ENCODE measurements at regions of chr15 and their contacts with region 1.

Region 1: DNA sequence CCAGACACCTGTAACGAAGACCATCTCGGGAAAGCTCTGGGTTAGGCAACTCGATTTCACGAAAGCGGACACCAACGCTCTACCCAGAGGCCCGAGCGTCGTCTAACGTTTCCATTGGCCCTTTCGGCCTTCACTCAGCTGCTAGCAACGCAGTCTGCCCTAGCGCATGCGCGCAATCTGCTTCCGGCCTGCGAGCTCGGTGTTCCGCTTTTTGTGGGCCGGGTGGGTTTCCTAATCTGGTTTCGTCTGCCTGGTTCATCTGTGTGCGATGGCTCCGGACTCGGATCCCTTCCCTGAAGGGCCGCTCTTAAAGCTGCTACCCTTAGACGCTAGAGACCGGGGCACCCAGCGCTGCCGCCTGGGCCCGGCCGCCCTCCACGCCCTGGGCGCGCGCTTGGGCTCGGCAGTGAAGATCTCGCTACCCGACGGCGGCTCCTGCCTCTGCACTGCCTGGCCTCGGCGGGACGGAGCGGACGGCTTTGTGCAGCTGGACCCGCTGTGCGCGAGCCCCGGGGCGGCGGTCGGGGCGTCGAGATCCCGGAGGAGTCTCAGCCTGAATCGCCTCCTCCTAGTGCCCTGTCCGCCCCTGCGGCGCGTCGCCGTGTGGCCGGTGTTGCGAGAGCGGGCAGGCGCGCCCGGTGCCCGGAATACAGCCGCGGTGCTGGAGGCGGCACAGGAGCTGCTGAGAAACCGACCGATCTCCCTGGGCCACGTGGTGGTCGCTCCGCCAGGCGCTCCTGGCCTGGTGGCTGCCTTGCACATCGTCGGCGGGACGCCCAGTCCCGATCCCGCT is 24.0 kb upstream of the GATM start:
- DNase-seq: peak; percentile 90
- ATAC-seq: peak; percentile 92
- H3K4me3 Mint-ChIP-seq: peak overlapping the region; percentile 95
- H3K27ac Mint-ChIP-seq: peak overlapping the region; percentile 91
- H3K4me1 Mint-ChIP-seq: peaks cover 33% of the 10 kb centered on the region
- H3K27me3 Mint-ChIP-seq: no peaks in the 10 kb centered on the region
- CTCF ChIP-seq: no peak

Region 2: GRCh38 chr15:44728576-44729407 is 673.6 kb before region 1 on chr15:
- CTCF ChIA-PET with region 1: no interaction called
- POLR2A ChIA-PET with region 1: no interaction called
- intact Hi-C with region 1: loop called (anchors 5 kb)
- DNase-seq: peak; percentile 86
- ATAC-seq: peak; percentile 74
- H3K4me3 Mint-ChIP-seq: peak overlapping the region; percentile 99
- H3K27ac Mint-ChIP-seq: peak overlapping the region; percentile 100
- H3K4me1 Mint-ChIP-seq: peaks cover 75% of the 10 kb centered on the region
- H3K27me3 Mint-ChIP-seq: no peaks in the 10 kb centered on the region
- CTCF ChIP-seq: no peak

Region 3: DNA sequence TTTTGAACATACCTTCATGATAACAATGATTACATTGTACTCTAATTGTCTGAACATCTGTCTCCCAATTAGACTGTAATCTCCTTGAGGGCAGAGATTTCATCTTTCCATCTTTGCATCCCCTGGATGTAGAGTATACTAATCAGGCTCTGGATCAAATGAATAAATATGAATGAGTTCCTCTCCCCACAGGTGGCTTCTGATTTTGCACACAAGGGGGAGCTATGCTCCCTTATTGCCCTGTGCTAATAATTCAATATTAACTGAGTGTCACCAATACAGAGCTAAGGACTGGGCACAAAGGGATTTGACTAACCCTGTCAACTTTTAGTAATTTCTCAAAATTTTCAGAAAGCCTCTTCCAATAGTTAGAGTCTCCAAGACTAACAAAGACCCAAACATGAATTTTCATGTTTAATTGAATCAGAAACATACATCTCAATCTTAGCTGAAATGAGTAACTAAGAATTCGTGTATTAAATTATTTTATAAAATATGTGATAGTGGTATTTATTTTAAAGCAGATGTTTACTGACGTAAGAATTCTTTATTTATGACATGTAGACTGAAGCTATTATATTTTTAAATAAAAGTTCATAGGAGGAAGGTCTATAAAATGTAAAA is 275.7 kb before region 1 on chr15:
- CTCF ChIA-PET with region 1: interaction called, 9 read pairs
- POLR2A ChIA-PET with region 1: no interaction called
- intact Hi-C with region 1: loop called (anchors 1 kb)
- DNase-seq: no peak
- ATAC-seq: peak; percentile 68
- H3K4me3 Mint-ChIP-seq: no peak overlapping the region
- H3K27ac Mint-ChIP-seq: no peak overlapping the region
- H3K4me1 Mint-ChIP-seq: peaks cover 7% of the 10 kb centered on the region
- H3K27me3 Mint-ChIP-seq: peaks cover 59% of the 10 kb centered on the region
- CTCF ChIP-seq: no peak

Region 4: GRCh38 chr15:45179221-45179985 is 223.0 kb before region 1 on chr15:
- CTCF ChIA-PET with region 1: interaction called, 11 read pairs
- POLR2A ChIA-PET with region 1: no interaction called
- intact Hi-C with region 1: no loop called
- DNase-seq: no peak
- ATAC-seq: peak; percentile 45
- H3K4me3 Mint-ChIP-seq: no peak overlapping the region
- H3K27ac Mint-ChIP-seq: no peak overlapping the region
- H3K4me1 Mint-ChIP-seq: peaks cover 3% of the 10 kb centered on the region
- H3K27me3 Mint-ChIP-seq: no peaks in the 10 kb centered on the region
- CTCF ChIP-seq: no peak

Region 5: GRCh38 chr15:45279024-45279698 is 123.2 kb before region 1 on chr15:
- CTCF ChIA-PET with region 1: interaction called, 3 read pairs
- POLR2A ChIA-PET with region 1: interaction called, 21 read pairs
- intact Hi-C with region 1: loop called (anchors 1 kb)
- DNase-seq: peak; percentile 99
- ATAC-seq: peak; percentile 99
- H3K4me3 Mint-ChIP-seq: peak overlapping the region; percentile 93
- H3K27ac Mint-ChIP-seq: peak overlapping the region; percentile 89
- H3K4me1 Mint-ChIP-seq: peaks cover 14% of the 10 kb centered on the region
- H3K27me3 Mint-ChIP-seq: no peaks in the 10 kb centered on the region
- CTCF ChIP-seq: no peak

Region 6: GRCh38 chr15:45378149-45378912 is 24.0 kb before region 1 on chr15 and contains the start of gene GATM:
- CTCF ChIA-PET with region 1: interaction called, 8 read pairs
- POLR2A ChIA-PET with region 1: interaction called, 19 read pairs
- intact Hi-C with region 1: loop called (anchors 1 kb)
- DNase-seq: peak; percentile 64
- ATAC-seq: peak; percentile 85
- H3K4me3 Mint-ChIP-seq: peak within 1 kb of the TSS; percentile 87
- H3K27ac Mint-ChIP-seq: peak within 1 kb of the TSS; percentile 86
- H3K4me1 Mint-ChIP-seq: peaks cover 25% of the 10 kb centered on the region
- H3K27me3 Mint-ChIP-seq: peaks cover 2% of the 10 kb centered on the region
- CTCF ChIP-seq: no peak
- total RNA-seq, gene GATM: 12.6 and 15.7 TPM in 2 replicates

Region 7: DNA sequence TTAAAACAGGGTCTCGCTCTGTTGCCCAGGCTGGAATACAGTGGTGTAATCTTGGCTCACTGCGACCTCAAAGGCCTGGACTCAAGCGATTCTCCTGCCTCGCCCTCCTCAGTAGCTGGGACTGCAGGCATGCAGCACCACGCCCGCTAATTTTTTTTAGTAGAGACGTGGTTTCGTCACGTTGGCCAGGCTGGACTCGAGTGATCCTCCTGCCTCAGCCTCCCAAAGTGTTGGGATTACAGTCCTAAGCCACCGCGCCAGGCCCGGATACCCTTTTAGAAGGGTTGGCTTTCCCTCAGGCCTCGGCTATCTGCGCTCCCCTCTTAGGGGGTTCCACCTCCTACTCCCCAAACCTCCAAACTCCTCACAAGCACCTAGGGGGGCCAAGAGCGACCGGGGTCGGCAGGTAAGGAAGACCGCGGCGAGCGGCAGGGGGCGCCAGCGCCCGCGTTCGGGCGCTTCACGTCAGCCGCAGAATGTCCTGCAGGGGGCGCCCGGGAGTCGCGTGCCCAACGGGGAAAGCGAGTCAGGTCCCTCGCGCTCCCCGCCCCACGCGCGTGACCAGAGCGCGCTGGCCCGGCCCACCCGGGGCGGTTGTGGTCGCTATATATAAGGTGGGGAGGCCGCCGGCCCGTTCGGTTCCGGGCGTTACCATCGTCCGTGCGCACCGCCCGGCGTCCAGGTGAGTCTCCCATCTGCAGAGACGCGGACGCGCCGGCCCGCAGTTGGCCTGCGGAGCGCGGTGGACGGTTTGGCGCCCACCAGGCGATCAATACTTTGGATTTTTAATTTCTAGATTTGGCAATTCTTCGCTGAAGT is 27.8 kb after region 1 on chr15:
- CTCF ChIA-PET with region 1: no interaction called
- POLR2A ChIA-PET with region 1: no interaction called
- intact Hi-C with region 1: no loop called
- DNase-seq: peak; percentile 87
- ATAC-seq: peak; percentile 94
- H3K4me3 Mint-ChIP-seq: peak overlapping the region; percentile 35
- H3K27ac Mint-ChIP-seq: no peak overlapping the region
- H3K4me1 Mint-ChIP-seq: peaks cover 4% of the 10 kb centered on the region
- H3K27me3 Mint-ChIP-seq: peaks cover 2% of the 10 kb centered on the region
- CTCF ChIP-seq: peak; percentile 98

Region 8: DNA sequence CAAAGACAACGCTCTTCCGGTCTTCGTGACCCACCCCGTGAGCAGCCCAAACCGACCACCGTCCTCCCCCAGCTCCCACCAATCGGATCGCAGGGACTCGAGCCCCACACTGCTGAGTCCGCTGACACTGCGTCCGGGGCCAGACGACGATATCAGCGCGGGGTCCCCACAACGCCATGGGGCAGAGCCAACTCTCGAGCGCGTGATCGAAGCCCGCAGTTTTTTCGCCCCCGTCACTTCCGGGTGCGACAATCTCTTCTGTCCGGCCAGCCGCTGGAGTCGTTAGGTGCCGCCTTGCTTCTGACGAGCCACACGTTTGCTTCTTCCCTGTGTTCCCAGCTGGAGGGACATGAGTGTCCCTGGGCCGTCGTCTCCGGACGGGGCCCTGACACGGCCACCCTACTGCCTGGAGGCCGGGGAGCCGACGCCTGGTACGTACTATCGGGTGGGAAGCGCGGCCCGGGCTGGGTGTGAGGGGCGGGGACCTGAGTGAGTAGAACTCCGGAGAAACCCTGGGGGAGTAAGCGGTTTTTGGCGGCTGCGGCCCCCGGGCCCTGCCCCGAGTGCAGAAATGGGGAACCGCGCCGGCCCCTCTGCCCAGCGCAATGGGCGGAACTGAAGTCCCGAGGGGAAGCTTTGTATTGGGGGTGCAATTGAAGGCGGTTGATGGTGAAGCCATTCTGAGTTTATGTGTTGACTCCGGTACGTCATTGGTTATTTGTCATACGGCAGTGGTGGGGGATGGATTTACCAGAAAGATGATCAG is 184.9 kb after region 1 on chr15 and contains the start of gene BLOC1S6:
- CTCF ChIA-PET with region 1: interaction called, 3 read pairs
- POLR2A ChIA-PET with region 1: interaction called, 14 read pairs
- intact Hi-C with region 1: loop called (anchors 2 kb)
- DNase-seq: peak; percentile 93
- ATAC-seq: peak; percentile 87
- H3K4me3 Mint-ChIP-seq: peak within 1 kb of the TSS; percentile 99
- H3K27ac Mint-ChIP-seq: peak within 1 kb of the TSS; percentile 100
- H3K4me1 Mint-ChIP-seq: peaks cover 44% of the 10 kb centered on the region
- H3K27me3 Mint-ChIP-seq: no peaks in the 10 kb centered on the region
- CTCF ChIP-seq: no peak
- total RNA-seq, gene BLOC1S6: 39.4 and 41.2 TPM in 2 replicates

Region 9: DNA sequence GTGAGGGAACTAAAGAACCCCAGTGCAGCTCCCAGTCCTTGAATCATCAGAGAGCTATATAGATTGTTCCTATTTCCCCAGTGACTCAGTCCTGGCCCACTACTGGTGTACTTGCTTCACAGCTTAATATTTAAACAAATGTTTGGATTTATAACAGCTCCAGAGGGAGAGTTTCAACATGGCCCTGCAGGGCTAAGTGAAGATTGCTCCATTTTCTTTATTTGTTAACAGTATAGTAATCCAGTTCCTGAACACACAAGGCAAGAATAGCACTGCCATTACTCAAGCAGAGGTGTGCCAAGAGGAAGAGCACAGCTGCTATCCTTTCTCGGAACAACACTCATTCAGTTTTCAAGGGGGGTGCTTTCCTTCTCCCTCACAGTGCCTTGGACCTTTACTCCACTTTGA is 239.0 kb after region 1 on chr15:
- CTCF ChIA-PET with region 1: no interaction called
- POLR2A ChIA-PET with region 1: no interaction called
- intact Hi-C with region 1: no loop called
- DNase-seq: no peak
- ATAC-seq: no peak
- H3K4me3 Mint-ChIP-seq: no peak overlapping the region
- H3K27ac Mint-ChIP-seq: no peak overlapping the region
- H3K4me1 Mint-ChIP-seq: peaks cover 51% of the 10 kb centered on the region
- H3K27me3 Mint-ChIP-seq: no peaks in the 10 kb centered on the region
- CTCF ChIP-seq: no peak

Measured in activated B cell treated with CpG ODN at 0.5 μM for 24 hours (primary cell).